ENCODE measurements at regions of chr2 and their contacts with region 1.

Region 1: DNA sequence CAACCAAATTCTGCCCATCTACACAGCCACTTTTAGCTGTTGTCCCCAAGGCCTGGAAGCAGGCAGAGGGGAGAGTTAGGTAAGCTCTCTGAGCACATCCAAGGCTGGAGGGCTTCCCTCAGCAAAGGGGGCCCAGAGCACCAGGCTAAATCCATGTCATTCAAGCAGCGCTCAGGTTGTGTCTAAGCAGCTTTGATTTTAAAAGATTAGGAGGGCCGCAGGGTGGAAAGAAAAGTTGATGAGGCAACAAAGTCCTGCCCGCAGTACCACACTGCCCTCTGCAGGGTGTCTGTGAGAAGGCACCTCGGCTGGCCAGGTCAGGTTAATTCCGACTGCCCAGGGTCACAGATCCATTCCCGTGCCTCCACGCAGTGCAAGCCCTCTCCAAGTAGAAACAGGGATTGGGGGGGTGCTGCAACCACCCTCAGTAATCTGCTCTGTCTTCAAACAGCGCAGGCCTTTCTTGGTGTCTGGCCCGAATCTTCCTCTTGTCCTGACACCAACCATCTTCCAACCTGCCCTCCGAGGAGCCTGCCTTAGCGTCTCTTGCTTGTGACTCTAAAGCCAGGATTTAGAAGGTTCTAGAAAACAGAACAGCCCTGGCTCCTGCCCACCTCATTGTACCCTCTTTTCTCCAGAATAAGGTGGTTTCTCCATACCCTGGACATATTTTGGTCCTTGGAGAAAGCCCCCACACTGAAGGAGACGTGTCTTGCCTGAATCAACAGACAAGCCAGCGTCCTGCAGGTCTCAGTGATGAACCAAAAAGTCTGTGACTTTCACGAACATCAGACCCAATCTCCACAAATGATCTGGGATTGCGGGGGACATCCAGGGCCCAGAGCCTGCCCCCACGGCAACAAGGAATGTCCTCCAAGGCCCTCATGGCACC is 289.2 kb downstream of the TNS1 start:
- DNase-seq: peak; percentile 82
- H3K4me3 Mint-ChIP-seq: no peak overlapping the region
- H3K27ac Mint-ChIP-seq: no peak overlapping the region
- H3K4me1 Mint-ChIP-seq: no peaks in the 10 kb centered on the region
- H3K27me3 Mint-ChIP-seq: peaks cover 2% of the 10 kb centered on the region

Region 2: DNA sequence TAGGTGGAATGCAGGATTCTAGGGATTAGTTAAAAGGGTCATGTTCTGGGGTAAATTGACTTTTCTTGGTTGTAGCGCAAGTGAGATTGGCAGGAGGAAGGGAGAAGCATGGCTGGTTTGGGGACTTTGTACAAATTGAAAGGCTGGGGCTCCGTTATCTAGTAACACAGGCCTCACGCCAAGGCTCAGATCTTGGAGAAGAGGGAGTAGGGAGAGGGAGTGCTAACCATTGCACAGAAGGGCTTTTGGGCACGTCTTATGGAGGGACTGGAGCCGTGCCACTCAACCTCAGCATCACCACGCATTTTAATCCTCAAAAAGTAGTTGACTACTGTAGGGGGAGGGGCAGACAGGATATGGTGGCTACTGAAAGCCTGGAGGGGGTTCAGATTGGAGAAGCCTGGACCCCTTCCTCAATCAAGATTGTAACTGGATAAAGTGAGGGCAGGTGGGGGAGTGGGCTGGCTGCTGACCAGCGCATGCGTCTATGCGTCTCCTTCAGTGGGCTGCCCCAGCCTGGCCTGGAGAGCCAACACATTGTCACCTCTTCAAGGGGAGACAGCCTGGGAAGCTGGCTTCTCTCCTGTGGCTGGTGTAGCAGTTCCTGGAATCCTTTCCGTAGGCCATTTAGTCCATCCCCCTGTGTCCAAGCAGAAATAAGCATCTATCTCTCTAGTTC is 1032.6 kb before region 1 on chr2:
- CTCF ChIA-PET with region 1: interaction called, 12 read pairs
- POLR2A ChIA-PET with region 1: no interaction called
- intact Hi-C with region 1: loop called (anchors 1 kb)
- DNase-seq: no peak
- H3K4me3 Mint-ChIP-seq: no peak overlapping the region
- H3K27ac Mint-ChIP-seq: no peak overlapping the region
- H3K4me1 Mint-ChIP-seq: no peaks in the 10 kb centered on the region
- H3K27me3 Mint-ChIP-seq: peaks cover 23% of the 10 kb centered on the region

Region 3: GRCh38 chr2:217510771-217511291 is 202.8 kb before region 1 on chr2:
- CTCF ChIA-PET with region 1: interaction called, 8 read pairs
- POLR2A ChIA-PET with region 1: no interaction called
- intact Hi-C with region 1: loop called (anchors 5 kb)
- DNase-seq: peak; percentile 44
- H3K4me3 Mint-ChIP-seq: no peak overlapping the region
- H3K27ac Mint-ChIP-seq: no peak overlapping the region
- H3K4me1 Mint-ChIP-seq: peaks cover 5% of the 10 kb centered on the region
- H3K27me3 Mint-ChIP-seq: no peaks in the 10 kb centered on the region

Region 4: DNA sequence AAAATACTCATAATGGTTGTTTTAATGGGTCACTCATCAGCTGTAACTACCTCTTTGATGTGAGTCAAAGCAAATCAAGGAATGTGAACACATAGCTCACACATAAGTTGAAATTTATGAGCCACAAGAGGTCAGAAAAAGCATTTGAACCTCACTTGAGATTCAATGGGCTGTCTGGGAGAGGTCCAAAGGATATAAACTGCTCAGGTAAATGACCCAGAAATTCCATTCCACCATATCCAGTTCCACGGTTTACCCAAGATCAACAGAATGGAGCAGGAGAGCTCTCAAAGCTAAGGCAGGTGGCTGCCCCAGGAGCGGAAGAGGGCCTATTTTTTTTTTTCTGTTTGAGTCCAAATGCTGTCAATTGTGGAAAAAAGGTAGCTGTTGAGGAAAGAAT is 174.9 kb before region 1 on chr2:
- CTCF ChIA-PET with region 1: no interaction called
- POLR2A ChIA-PET with region 1: no interaction called
- intact Hi-C with region 1: no loop called
- DNase-seq: no peak
- H3K4me3 Mint-ChIP-seq: no peak overlapping the region
- H3K27ac Mint-ChIP-seq: no peak overlapping the region
- H3K4me1 Mint-ChIP-seq: no peaks in the 10 kb centered on the region
- H3K27me3 Mint-ChIP-seq: peaks cover 2% of the 10 kb centered on the region

Region 5: DNA sequence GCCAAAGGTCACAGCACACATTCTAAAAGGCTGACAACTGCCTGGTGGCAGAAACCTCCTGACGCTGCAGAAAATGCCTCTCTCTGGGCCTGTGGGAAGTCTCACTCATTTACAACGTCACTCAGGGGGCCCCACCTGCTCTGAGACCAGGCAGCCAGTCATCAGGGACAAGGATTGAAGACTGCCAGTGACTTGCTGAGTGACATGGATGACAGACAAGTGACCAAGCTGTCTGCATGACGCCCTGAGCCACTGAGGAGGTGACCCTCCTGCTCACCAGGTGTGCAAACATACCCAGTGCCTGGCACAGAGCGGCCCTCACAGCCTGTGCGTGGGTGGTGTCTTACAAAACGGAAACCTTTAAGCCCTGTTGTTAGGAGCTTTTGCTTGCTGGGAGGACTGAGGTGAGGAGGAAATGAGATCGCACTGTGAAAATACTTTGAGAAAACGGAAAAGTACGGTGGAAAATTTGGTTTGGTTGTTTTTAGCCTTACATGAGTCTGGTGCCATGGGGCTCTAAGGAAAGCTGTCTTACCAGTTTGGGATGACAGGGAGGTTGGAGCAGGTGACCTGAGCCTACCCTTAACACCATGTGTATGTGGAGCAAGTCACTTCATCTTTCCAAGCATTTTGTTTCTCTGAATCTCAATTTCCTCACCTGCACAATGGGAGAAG is 103.1 kb before region 1 on chr2:
- CTCF ChIA-PET with region 1: interaction called, 5 read pairs
- POLR2A ChIA-PET with region 1: no interaction called
- intact Hi-C with region 1: loop called (anchors 1 kb)
- DNase-seq: peak; percentile 86
- H3K4me3 Mint-ChIP-seq: peak overlapping the region; percentile 42
- H3K27ac Mint-ChIP-seq: peak overlapping the region; percentile 96
- H3K4me1 Mint-ChIP-seq: peaks cover 50% of the 10 kb centered on the region
- H3K27me3 Mint-ChIP-seq: no peaks in the 10 kb centered on the region

Region 6: GRCh38 chr2:217650716-217651360 is 62.8 kb before region 1 on chr2:
- CTCF ChIA-PET with region 1: interaction called, 33 read pairs
- POLR2A ChIA-PET with region 1: no interaction called
- intact Hi-C with region 1: loop called (anchors 1 kb)
- DNase-seq: peak; percentile 17
- H3K4me3 Mint-ChIP-seq: no peak overlapping the region
- H3K27ac Mint-ChIP-seq: no peak overlapping the region
- H3K4me1 Mint-ChIP-seq: no peaks in the 10 kb centered on the region
- H3K27me3 Mint-ChIP-seq: no peaks in the 10 kb centered on the region

Region 7: GRCh38 chr2:217766356-217766755 is 52.7 kb after region 1 on chr2:
- CTCF ChIA-PET with region 1: no interaction called
- POLR2A ChIA-PET with region 1: no interaction called
- intact Hi-C with region 1: no loop called
- DNase-seq: no peak
- H3K4me3 Mint-ChIP-seq: no peak overlapping the region
- H3K27ac Mint-ChIP-seq: no peak overlapping the region
- H3K4me1 Mint-ChIP-seq: no peaks in the 10 kb centered on the region
- H3K27me3 Mint-ChIP-seq: peaks cover 7% of the 10 kb centered on the region

Region 8: GRCh38 chr2:217902379-217903141 is 188.9 kb after region 1 on chr2:
- CTCF ChIA-PET with region 1: no interaction called
- POLR2A ChIA-PET with region 1: no interaction called
- intact Hi-C with region 1: no loop called
- DNase-seq: peak; percentile 26
- H3K4me3 Mint-ChIP-seq: no peak overlapping the region
- H3K27ac Mint-ChIP-seq: no peak overlapping the region
- H3K4me1 Mint-ChIP-seq: no peaks in the 10 kb centered on the region
- H3K27me3 Mint-ChIP-seq: peaks cover 16% of the 10 kb centered on the region

Measured in activated CD4-positive, alpha-beta memory T cell treated with anti-CD3 and anti-CD28 coated beads for 36 hours (primary cell).